ENCODE measurements at regions of chrX and their contacts with region 1.

Region 1: DNA sequence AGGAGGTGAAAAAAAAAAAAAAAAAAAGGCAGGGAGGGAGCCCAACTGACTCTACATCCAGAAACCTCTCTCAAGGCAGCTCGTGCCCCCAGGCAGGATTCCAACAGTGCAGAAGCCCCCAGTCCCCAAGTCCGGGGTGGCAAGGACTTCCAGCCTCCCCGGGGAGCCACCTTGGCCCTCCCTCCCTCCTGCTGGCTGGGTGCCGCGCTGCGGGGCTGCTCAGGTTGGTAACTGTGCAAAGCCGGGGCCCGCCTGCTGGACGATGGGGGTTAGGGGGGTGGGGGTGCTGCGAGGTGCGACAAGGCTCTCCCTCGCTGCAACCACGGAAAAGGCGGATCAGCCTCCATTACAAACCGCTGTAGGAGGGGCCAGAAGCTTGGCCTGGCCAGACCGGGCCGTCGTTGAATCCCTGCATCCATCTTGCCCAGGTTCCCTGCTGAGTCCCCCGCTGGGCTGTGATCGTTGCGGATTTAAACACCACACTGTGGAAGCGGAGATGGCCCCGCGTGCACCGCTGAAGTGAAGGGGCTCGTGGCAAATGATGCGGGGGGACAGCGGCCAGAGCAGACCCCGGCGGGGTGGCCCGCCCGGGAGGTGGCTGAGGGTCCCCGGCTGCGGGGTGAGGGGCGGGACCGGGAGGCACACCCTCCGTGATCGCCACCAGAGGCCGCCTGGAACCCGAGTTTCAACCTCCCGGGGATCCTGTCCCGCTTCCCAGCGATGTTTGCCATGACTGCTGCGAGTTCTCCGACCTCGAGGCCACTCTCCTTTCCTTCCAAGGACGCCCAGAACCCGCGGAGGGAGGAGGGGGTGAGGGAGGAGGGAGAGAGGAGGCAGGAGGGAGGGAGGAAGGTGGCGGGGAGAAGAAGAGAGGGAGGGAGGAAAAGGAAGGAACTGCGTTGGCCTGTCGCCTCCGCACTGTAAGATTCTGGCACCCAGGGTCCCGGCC is 58.0 kb upstream of the DDX3X start:
- DNase-seq: peak; percentile 17
- H3K4me3 ChIP-seq: peak overlapping the region; percentile 54 to 56 (median 54)
- H3K27ac ChIP-seq: no peak overlapping the region
- H3K4me1 ChIP-seq: peaks cover 8% of the 10 kb centered on the region
- H3K27me3 ChIP-seq: no peaks in the 10 kb centered on the region
- CTCF ChIP-seq: peak; percentile 23 to 68

Region 2: GRCh38 chrX:41167888-41168287 is 108.0 kb before region 1 on chrX:
- CTCF ChIA-PET with region 1: no interaction called
- dilution Hi-C with region 1: no loop called
- in situ Hi-C with region 1: no loop called
- intact Hi-C with region 1: no loop called
- DNase-seq: peak; percentile 2
- H3K4me3 ChIP-seq: no peak overlapping the region
- H3K27ac ChIP-seq: no peak overlapping the region
- H3K4me1 ChIP-seq: no peaks in the 10 kb centered on the region
- H3K27me3 ChIP-seq: no peaks in the 10 kb centered on the region
- CTCF ChIP-seq: no peak

Region 3: DNA sequence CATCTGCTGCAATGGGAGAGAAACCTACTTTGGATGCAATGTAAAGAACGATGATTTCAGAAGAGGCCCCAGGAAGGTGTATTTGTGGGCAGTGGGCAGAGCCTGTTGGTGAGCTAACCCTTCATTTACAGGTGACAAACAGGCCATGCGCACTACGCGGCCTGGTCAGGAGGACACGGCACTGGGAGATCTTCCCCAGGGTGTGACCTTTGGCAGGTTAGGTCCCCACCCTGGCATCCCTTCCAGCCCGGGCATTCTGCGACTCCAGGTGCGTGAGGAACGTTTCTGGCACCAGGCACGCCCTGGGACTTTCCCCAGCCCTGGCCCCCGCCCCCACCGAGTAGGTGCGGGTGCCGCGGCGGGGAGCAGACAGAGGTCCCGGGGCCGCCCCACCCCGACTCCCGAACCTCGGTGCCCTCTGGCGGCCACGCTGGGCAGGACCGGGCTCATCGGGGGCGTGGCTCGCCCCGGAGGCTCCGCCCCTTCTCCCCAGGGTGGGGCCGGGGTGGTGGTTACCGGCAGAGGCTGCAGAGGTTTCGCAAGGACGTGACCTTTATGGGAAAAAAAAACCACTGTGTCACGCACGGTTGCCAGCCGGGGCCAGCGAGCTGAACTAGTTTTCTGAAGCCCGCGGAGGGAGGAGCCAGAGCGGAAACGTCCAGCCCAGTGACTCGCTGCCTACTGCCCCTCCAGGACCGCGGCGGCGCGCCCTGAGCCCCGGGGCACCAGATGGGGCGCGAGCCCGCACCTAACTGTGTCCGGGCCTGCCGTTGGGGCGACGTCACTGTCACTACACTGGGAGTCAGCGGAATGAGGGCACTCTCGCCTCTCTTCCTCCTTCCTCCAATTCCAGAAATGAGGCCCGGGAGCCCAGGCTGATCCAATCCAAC is 166.2 kb after region 1 on chrX:
- CTCF ChIA-PET with region 1: no interaction called
- dilution Hi-C with region 1: no loop called
- in situ Hi-C with region 1: loop called in 1 of 2 experiments (anchors 5 kb)
- intact Hi-C with region 1: no loop called
- DNase-seq: peak; percentile 78
- H3K4me3 ChIP-seq: peak overlapping the region in 2 of 3 experiments; percentile 12 to 30
- H3K27ac ChIP-seq: no peak overlapping the region
- H3K4me1 ChIP-seq: no peaks in the 10 kb centered on the region
- H3K27me3 ChIP-seq: peaks cover 3% of the 10 kb centered on the region
- CTCF ChIP-seq: peak; percentile 23 to 65

Region 4: GRCh38 chrX:41457613-41458192 is 181.8 kb after region 1 on chrX:
- CTCF ChIA-PET with region 1: no interaction called
- dilution Hi-C with region 1: no loop called
- in situ Hi-C with region 1: no loop called
- intact Hi-C with region 1: loop called (anchors 5 kb)
- DNase-seq: no peak
- H3K4me3 ChIP-seq: no peak overlapping the region
- H3K27ac ChIP-seq: no peak overlapping the region
- H3K4me1 ChIP-seq: no peaks in the 10 kb centered on the region
- H3K27me3 ChIP-seq: peaks cover 3% of the 10 kb centered on the region
- CTCF ChIP-seq: peak; percentile 13 to 21

Region 5: GRCh38 chrX:41759817-41760216 is 483.9 kb after region 1 on chrX:
- CTCF ChIA-PET with region 1: no interaction called
- dilution Hi-C with region 1: no loop called
- in situ Hi-C with region 1: loop called in 1 of 2 experiments (anchors 25 kb)
- intact Hi-C with region 1: loop called (anchors 5 kb)
- DNase-seq: peak; percentile 3
- H3K4me3 ChIP-seq: no peak overlapping the region
- H3K27ac ChIP-seq: no peak overlapping the region
- H3K4me1 ChIP-seq: no peaks in the 10 kb centered on the region
- H3K27me3 ChIP-seq: no peaks in the 10 kb centered on the region
- CTCF ChIP-seq: peak; percentile 50

Region 6: DNA sequence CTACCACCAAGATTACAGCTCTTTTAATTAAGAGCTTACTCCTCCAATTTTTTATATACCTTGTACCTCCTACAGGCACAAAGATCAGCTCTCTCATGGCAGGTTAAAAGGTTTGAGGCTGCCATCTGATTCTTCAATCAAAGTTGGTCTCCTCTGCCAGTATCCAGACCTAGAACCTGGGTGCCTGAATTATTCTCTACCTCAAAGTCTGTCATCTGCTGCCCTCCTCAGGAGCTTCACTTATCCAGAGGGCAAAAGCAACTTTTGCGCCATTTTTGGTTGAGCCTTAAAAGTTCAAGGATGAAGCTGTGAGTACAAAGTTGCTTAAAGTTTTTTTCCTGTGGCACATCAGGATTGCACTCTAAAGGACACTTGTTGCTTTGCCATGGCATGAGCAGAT is 1845.7 kb after region 1 on chrX:
- CTCF ChIA-PET with region 1: no interaction called
- dilution Hi-C with region 1: no loop called
- in situ Hi-C with region 1: no loop called
- intact Hi-C with region 1: loop called (anchors 5 kb)
- DNase-seq: peak; percentile 9
- H3K4me3 ChIP-seq: no peak overlapping the region
- H3K27ac ChIP-seq: no peak overlapping the region
- H3K4me1 ChIP-seq: no peaks in the 10 kb centered on the region
- H3K27me3 ChIP-seq: peaks cover 8% of the 10 kb centered on the region
- CTCF ChIP-seq: peak; percentile 12 to 50

Measured in mammary epithelial cell (primary cell).